CD8-positive, alpha-beta T cell (primary cell): ENCODE measurements at regions of chr17 and their contacts with region 1.

Region 1: GRCh38 chr17:65198653-65199382 is 61.6 kb downstream of the RGS9 start:
- DNase-seq: peak in 5 of 9 experiments; percentile 6 to 76 (median 52)
- ATAC-seq: peak; percentile 56
- H3K4me3 ChIP-seq: no peak overlapping the region
- H3K4me3 Mint-ChIP-seq: no peak overlapping the region
- H3K27ac ChIP-seq: no peak overlapping the region
- H3K27ac Mint-ChIP-seq: no peak overlapping the region
- H3K4me1 ChIP-seq: peaks cover 3% of the 10 kb centered on the region
- H3K4me1 Mint-ChIP-seq: peaks cover 5% of the 10 kb centered on the region
- H3K27me3 ChIP-seq: no peaks in the 10 kb centered on the region
- H3K27me3 Mint-ChIP-seq: no peaks in the 10 kb centered on the region
- CTCF ChIP-seq: peak; percentile 92

Region 2: GRCh38 chr17:64778240-64779097 is 420.3 kb before region 1 on chr17:
- CTCF ChIA-PET with region 1: no interaction called
- POLR2A ChIA-PET with region 1: no interaction called
- intact Hi-C with region 1: loop called in 1 of 2 experiments (anchors 5 kb)
- DNase-seq: peak in 4 of 9 experiments; percentile 28 to 62 (median 51)
- ATAC-seq: no peak
- H3K4me3 ChIP-seq: peak overlapping the region in 1 of 2 experiments; percentile 24
- H3K4me3 Mint-ChIP-seq: peak overlapping the region; percentile 58
- H3K27ac ChIP-seq: no peak overlapping the region
- H3K27ac Mint-ChIP-seq: no peak overlapping the region
- H3K4me1 ChIP-seq: peaks cover 37% of the 10 kb centered on the region
- H3K4me1 Mint-ChIP-seq: peaks cover 26% of the 10 kb centered on the region
- H3K27me3 ChIP-seq: no peaks in the 10 kb centered on the region
- H3K27me3 Mint-ChIP-seq: peaks cover 2% of the 10 kb centered on the region
- CTCF ChIP-seq: no peak

Region 3: GRCh38 chr17:65181237-65182061 is 17.4 kb before region 1 on chr17:
- CTCF ChIA-PET with region 1: interaction called, 10 read pairs
- POLR2A ChIA-PET with region 1: no interaction called
- intact Hi-C with region 1: no loop called
- DNase-seq: peak in 2 of 9 experiments; percentile 13 to 35
- ATAC-seq: no peak
- H3K4me3 ChIP-seq: no peak overlapping the region
- H3K4me3 Mint-ChIP-seq: no peak overlapping the region
- H3K27ac ChIP-seq: peak overlapping the region in 1 of 2 experiments; percentile 68
- H3K27ac Mint-ChIP-seq: peak overlapping the region; percentile 78
- H3K4me1 ChIP-seq: peaks cover 41% of the 10 kb centered on the region
- H3K4me1 Mint-ChIP-seq: peaks cover 49% of the 10 kb centered on the region
- H3K27me3 ChIP-seq: no peaks in the 10 kb centered on the region
- H3K27me3 Mint-ChIP-seq: peaks cover 2% of the 10 kb centered on the region
- CTCF ChIP-seq: no peak